ENCODE measurements at regions of chr6 and their contacts with region 1.

Region 1: GRCh38 chr6:152669895-152670294 is 27.8 kb upstream of the MYCT1 start:
- DNase-seq: no peak
- H3K4me3 Mint-ChIP-seq: no peak overlapping the region
- H3K27ac Mint-ChIP-seq: no peak overlapping the region
- H3K4me1 Mint-ChIP-seq: no peaks in the 10 kb centered on the region
- H3K27me3 Mint-ChIP-seq: peaks cover 3% of the 10 kb centered on the region

Region 2: GRCh38 chr6:152484806-152485205 is 185.1 kb before region 1 on chr6:
- CTCF ChIA-PET with region 1: interaction called, 3 read pairs
- intact Hi-C with region 1: loop called (anchors 1 kb)
- DNase-seq: no peak
- H3K4me3 Mint-ChIP-seq: no peak overlapping the region
- H3K27ac Mint-ChIP-seq: no peak overlapping the region
- H3K4me1 Mint-ChIP-seq: no peaks in the 10 kb centered on the region
- H3K27me3 Mint-ChIP-seq: peaks cover 7% of the 10 kb centered on the region

Region 3: GRCh38 chr6:152769159-152769558 is 99.3 kb after region 1 on chr6:
- CTCF ChIA-PET with region 1: no interaction called
- intact Hi-C with region 1: no loop called
- DNase-seq: no peak
- H3K4me3 Mint-ChIP-seq: no peak overlapping the region
- H3K27ac Mint-ChIP-seq: no peak overlapping the region
- H3K4me1 Mint-ChIP-seq: no peaks in the 10 kb centered on the region
- H3K27me3 Mint-ChIP-seq: no peaks in the 10 kb centered on the region